Cardiac septum (tissue), 1 donor: ENCODE measurements at regions of chr11 and their contacts with region 1.

Region 1: GRCh38 chr11:64269380-64270234 is 14.9 kb downstream of the BAD start:
- DNase-seq: peak; percentile 99

Region 2: DNA sequence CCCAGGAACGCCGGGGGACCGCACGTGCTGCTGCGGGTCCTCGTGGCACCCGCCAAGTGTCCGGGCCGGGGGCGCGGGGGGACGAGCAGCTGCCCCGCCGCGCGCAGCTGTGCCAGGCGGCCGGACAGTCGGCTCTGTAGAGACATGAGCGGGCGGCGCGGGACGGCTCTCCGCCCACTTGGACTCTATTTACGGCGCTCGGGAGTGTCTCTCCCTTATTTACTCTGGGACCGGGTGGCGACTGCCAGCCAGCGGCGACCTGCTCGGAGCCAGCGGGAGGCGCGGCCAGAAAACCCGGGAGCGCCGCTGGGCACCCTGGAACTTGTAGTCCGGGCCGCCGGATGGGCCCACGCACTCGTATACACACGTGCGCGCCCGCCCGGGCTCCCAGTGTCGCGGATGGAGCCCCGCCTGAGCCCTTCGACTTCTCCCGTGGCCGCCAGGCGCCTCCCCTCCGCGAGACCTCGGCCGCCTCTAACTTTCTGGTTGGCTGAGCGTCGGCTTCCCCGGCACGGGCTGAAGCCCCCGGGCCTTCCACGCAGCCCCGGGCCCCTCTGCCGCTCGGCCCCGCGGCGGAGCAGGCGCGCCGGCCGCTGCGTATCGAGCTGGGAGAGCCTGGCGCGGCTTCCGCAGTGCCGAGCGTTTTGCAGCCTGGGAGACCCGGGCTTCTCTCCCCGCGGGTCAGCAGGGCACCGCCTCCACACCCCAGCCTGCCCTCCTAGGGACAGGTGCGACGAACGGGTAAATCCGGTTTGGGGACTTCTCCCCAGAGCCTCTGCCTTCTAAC is 103.6 kb before region 1 on chr11 and contains the start of gene MACROD1:
- intact Hi-C with region 1: no loop called
- DNase-seq: peak; percentile 91
- total RNA-seq, gene MACROD1: 86.2 TPM

Region 3: GRCh38 chr11:64204464-64204989 is 65.1 kb before region 1 on chr11:
- intact Hi-C with region 1: loop called (anchors 2 kb)
- DNase-seq: peak; percentile 93

Region 4: DNA sequence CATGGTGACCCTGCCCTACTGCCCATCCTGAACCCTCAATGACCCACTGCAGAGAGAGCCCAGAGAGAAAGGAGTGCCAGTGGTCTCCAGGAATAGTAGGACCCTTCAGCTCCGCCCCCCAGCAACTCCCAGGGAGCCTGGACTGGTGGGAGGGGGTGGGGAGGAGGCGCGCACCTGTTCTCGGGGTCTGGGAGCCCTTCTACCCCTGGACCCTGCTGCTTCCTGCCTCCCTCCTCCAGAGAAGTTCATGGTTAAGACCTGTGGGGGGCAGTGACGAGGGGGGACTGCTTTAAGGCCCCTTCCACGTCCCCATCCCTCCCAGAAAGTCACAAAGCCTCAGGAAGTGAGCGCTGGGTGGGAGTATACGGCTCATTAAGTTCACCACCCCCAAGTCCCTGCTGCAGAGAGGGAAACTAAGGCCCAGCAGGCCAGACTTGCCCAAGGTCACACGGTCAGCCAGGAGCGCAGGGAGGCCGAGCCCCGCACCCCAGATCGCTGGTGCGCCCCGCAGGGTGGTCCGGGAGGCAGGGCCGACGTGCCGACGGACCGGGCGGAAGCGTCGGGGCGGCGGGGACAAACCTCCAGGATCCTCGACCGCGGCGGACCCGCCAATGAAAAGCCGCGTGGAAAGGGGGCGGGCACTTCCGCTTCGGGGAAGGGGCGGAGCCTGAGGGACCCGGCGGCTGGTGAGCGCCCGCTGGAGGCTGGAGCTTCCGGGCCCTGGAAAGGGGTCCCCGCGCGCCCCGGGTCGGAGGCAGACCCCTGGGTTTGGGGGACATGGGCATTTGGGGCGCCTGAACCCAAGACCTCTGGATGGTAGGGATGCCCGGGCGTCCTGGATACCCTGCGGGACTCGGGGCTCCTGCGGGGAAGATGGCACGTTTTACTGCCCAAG is 43.7 kb before region 1 on chr11 and contains the starts of genes NUDT22 and TRPT1:
- intact Hi-C with region 1: loop called (anchors 1 kb)
- DNase-seq: peak; percentile 98
- total RNA-seq, gene NUDT22: 75.0 TPM
- total RNA-seq, gene TRPT1: 49.7 TPM

Region 5: GRCh38 chr11:64246871-64247728 is 22.5 kb before region 1 on chr11 and contains the start of gene PPP1R14B:
- intact Hi-C with region 1: loop called (anchors 1 kb)
- DNase-seq: peak; percentile 92
- total RNA-seq, gene PPP1R14B: 113 TPM

Region 6: DNA sequence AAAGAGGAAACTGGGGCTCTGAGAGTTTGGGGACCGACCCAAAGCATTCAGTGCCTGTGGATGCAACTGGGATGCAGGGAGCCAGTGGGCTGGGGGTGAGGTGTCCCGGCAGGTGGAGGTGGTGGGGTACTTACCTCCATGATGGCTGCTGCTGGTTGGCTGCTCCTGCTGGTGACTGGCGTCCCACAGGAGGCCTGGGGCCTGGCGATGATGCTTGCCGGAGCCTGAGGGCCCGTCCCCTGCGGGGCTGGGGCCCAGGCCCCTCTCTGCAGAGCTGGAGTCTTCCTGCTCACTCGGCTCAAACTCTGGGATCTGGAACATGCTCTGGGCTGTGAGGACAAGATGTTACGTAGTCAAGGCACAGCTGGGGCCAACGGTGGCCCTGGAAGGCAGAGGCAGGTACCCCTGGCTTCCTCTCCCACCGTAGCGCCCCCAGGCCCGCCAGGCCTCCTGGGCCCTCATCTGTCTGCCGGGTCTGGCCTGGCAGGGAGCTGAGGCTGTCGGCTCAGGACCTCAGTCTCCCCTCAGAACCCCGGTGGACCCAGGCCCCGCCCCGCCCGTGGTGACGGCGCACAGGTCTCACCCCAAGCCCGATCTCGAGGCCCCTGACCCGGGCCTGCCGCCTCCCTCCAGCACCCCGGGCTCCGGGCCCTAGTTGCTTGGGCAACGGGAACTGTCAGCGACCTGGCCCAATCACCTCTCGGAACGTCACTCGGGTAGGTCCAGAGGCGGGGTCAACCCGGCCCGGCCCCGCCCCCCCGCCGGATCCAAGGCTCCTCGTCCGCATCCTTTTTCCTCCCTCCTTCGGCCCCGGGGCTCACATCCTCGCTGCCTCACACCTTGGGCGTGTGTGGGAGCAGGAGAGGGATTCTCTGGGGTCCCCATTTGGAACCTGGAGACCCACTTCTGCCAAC is 14.7 kb after region 1 on chr11 and contains the start of gene BAD:
- intact Hi-C with region 1: loop called (anchors 1 kb)
- DNase-seq: peak; percentile 98
- total RNA-seq, gene BAD: 45.9 TPM

Region 7: GRCh38 chr11:64304316-64305072 is 34.9 kb after region 1 on chr11:
- intact Hi-C with region 1: loop called (anchors 5 kb)
- DNase-seq: peak; percentile 96